ENCODE measurements at regions of chr12 and their contacts with region 1.

Region 1: DNA sequence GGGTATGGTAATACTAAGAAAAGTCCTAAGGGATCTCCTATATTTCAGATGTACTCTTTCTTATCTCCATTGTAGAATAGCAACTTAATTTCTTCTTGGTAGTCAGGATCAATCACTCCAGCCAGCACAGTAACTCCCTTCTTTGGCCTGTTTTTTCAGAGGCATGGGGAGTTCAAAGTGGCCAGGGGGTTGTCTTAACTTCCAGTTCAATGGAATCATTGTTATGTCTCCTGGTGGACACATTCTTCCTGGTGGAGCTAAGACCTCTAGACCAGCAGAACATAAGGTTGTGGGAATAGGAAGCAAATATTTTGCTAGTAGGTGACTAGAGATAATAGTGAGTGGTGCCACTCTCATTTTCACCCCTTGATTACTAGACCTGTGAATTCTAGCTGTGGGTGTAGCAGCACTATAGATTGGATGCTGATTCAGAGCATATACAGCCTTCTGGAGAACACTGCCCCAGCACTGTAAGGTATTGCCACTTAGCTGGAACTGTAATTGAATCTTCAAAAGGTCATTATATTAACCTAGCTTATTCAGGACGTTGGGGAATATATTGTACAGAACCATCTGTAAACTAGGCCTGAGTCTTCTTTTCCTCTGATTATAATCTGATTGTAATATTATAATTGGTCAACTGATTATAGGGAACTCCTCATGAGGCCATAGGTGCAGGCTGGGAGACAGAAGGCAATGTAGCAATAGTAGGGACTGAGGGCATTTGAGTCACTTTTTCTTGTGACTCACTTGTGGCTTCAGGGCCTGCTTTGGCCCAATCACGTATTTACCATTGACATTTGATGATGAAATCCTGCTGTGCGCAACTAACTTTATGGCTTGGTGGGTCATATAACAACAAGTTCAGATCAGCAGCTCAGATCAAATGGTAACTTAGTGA is 60.2 kb upstream of the ATP2B1 start:
- DNase-seq: no peak
- ATAC-seq: peak; percentile 40
- H3K4me3 Mint-ChIP-seq: no peak overlapping the region
- H3K27ac Mint-ChIP-seq: peak overlapping the region; percentile 41
- H3K4me1 Mint-ChIP-seq: peaks cover 20% of the 10 kb centered on the region
- H3K27me3 Mint-ChIP-seq: no peaks in the 10 kb centered on the region
- CTCF ChIP-seq: no peak

Region 2: GRCh38 chr12:89632778-89633177 is 136.1 kb before region 1 on chr12:
- CTCF ChIA-PET with region 1: no interaction called
- POLR2A ChIA-PET with region 1: no interaction called
- intact Hi-C with region 1: no loop called
- DNase-seq: no peak
- ATAC-seq: no peak
- H3K4me3 Mint-ChIP-seq: no peak overlapping the region
- H3K27ac Mint-ChIP-seq: no peak overlapping the region
- H3K4me1 Mint-ChIP-seq: peaks cover 5% of the 10 kb centered on the region
- H3K27me3 Mint-ChIP-seq: no peaks in the 10 kb centered on the region
- CTCF ChIP-seq: no peak

Region 3: GRCh38 chr12:89783357-89784060 is 14.7 kb after region 1 on chr12:
- CTCF ChIA-PET with region 1: no interaction called
- POLR2A ChIA-PET with region 1: interaction called, 4 read pairs
- intact Hi-C with region 1: loop called (anchors 2 kb)
- DNase-seq: no peak
- ATAC-seq: no peak
- H3K4me3 Mint-ChIP-seq: no peak overlapping the region
- H3K27ac Mint-ChIP-seq: no peak overlapping the region
- H3K4me1 Mint-ChIP-seq: peaks cover 14% of the 10 kb centered on the region
- H3K27me3 Mint-ChIP-seq: no peaks in the 10 kb centered on the region
- CTCF ChIP-seq: no peak

Region 4: DNA sequence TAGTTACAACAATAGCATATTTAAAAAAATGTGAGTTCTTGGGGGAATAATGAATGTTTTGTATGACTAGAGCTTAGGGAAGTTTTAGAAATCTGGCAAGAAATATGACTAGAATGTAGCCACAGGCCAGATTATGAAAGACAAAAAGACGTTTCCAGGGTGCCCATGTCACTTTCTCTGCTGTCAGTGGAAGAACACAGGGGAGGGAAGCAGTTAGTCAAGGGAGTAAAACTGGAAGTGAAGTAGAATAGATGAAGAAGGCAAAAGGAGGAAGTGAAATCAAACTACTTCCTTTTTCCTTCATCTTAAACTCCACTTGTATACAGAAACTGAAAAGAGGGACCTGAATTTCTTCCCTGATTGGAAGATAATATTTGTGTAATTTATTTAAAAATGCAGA is 21.0 kb after region 1 on chr12:
- CTCF ChIA-PET with region 1: no interaction called
- POLR2A ChIA-PET with region 1: no interaction called
- intact Hi-C with region 1: loop called (anchors 2 kb)
- DNase-seq: no peak
- ATAC-seq: peak; percentile 97
- H3K4me3 Mint-ChIP-seq: peak overlapping the region; percentile 67
- H3K27ac Mint-ChIP-seq: peak overlapping the region; percentile 87
- H3K4me1 Mint-ChIP-seq: peaks cover 20% of the 10 kb centered on the region
- H3K27me3 Mint-ChIP-seq: no peaks in the 10 kb centered on the region
- CTCF ChIP-seq: no peak

Region 5: GRCh38 chr12:89984846-89985245 is 216.0 kb after region 1 on chr12:
- CTCF ChIA-PET with region 1: no interaction called
- POLR2A ChIA-PET with region 1: interaction called, 11 read pairs
- intact Hi-C with region 1: no loop called
- DNase-seq: no peak
- ATAC-seq: no peak
- H3K4me3 Mint-ChIP-seq: no peak overlapping the region
- H3K27ac Mint-ChIP-seq: no peak overlapping the region
- H3K4me1 Mint-ChIP-seq: peaks cover 3% of the 10 kb centered on the region
- H3K27me3 Mint-ChIP-seq: no peaks in the 10 kb centered on the region
- CTCF ChIP-seq: no peak

Region 6: GRCh38 chr12:90064852-90065801 is 296.3 kb after region 1 on chr12:
- CTCF ChIA-PET with region 1: no interaction called
- POLR2A ChIA-PET with region 1: no interaction called
- intact Hi-C with region 1: no loop called
- DNase-seq: no peak
- ATAC-seq: no peak
- H3K4me3 Mint-ChIP-seq: no peak overlapping the region
- H3K27ac Mint-ChIP-seq: no peak overlapping the region
- H3K4me1 Mint-ChIP-seq: peaks cover 4% of the 10 kb centered on the region
- H3K27me3 Mint-ChIP-seq: no peaks in the 10 kb centered on the region
- CTCF ChIP-seq: no peak

Measured in activated B cell treated with CpG ODN at 0.5 μM for 24 hours (primary cell).